Activated CD8-positive, alpha-beta memory T cell treated with anti-CD3 and anti-CD28 coated beads, Interleukin-2, amount 10 ng/mL, durations not matched to agents 7 days and 5 days (primary cell): ENCODE measurements at regions of chr1 and their contacts with region 1.

Region 1: GRCh38 chr1:88877382-88877825 is 14.0 kb downstream of the GTF2B start:
- DNase-seq: no peak
- ATAC-seq: no peak
- H3K4me3 Mint-ChIP-seq: no peak overlapping the region
- H3K27ac Mint-ChIP-seq: no peak overlapping the region
- H3K4me1 Mint-ChIP-seq: peaks cover 28% of the 10 kb centered on the region
- H3K27me3 Mint-ChIP-seq: no peaks in the 10 kb centered on the region

Region 2: DNA sequence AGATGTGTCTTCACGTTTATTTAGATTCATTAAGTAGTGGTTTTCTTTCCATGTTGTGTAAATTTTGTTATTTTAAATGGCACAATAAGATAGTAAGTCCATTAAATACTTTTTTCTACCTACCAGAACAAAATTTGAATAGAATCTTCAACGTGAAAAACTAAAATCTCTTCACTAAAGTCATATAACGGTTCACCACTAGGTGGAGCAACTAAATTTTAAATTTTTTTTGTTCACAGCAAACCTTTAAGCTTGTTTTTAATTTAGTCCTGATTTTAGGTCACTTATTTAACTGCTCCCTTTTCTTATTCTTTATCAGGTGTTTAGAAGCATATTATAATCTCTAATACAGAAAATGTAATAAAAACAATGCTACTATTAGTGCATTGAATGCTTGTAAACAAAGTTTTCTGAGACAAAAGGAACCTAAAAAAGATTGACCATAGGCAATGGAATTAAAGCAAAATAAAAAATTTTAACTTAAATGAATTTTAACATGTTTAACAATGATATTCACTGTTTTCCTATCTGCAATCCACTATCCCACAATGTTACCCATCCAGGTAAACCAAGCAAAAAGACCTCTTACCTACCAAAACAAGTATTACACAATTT is 221.6 kb before region 1 on chr1:
- CTCF ChIA-PET with region 1: interaction called, 42 read pairs
- DNase-seq: no peak
- ATAC-seq: no peak
- H3K4me3 Mint-ChIP-seq: no peak overlapping the region
- H3K27ac Mint-ChIP-seq: no peak overlapping the region
- H3K4me1 Mint-ChIP-seq: peaks cover 10% of the 10 kb centered on the region
- H3K27me3 Mint-ChIP-seq: peaks cover 14% of the 10 kb centered on the region

Region 3: DNA sequence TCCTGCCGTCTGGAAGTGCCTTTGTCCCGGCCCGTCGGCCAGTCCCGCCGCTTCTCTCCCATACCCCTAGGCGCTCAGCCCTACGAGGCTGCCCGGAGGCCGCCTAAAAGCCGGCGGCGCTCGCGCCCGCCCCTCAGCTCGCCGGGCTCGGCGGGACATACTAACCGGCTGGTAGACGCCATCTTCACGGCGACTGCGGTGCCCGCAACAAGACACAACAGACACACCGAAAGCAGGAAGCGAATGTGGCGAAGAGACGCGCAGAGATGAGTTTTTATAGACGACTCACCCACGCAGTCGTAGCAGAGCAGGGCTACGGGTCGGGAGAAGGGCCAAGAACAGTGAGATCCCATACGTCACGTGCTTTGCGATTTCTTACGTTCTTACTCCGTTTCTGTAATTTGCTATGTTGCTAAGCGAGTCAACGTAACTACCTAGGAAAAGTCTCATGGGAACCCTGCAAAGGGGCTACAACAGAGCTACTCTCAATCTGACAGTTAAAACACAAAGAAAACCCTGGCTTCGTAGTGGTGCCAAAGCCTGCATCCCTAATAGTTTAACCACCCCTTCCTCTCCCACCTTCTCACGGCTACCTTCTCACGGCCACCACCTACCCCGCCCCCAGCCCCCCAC is 14.0 kb after region 1 on chr1 and contains the start of gene GTF2B:
- CTCF ChIA-PET with region 1: interaction called, 45 read pairs
- DNase-seq: peak; percentile 97
- ATAC-seq: peak; percentile 87
- H3K4me3 Mint-ChIP-seq: peak within 1 kb of the TSS; percentile 87
- H3K27ac Mint-ChIP-seq: peak within 1 kb of the TSS; percentile 97
- H3K4me1 Mint-ChIP-seq: peaks cover 54% of the 10 kb centered on the region
- H3K27me3 Mint-ChIP-seq: no peaks in the 10 kb centered on the region
- total RNA-seq, gene GTF2B: 34.8 to 42.4 TPM

Region 4: GRCh38 chr1:88983791-88984559 is 106.6 kb after region 1 on chr1:
- CTCF ChIA-PET with region 1: no interaction called
- DNase-seq: peak; percentile 55
- ATAC-seq: peak; percentile 62
- H3K4me3 Mint-ChIP-seq: peak overlapping the region; percentile 64
- H3K27ac Mint-ChIP-seq: peak overlapping the region; percentile 86
- H3K4me1 Mint-ChIP-seq: peaks cover 79% of the 10 kb centered on the region
- H3K27me3 Mint-ChIP-seq: no peaks in the 10 kb centered on the region

Region 5: GRCh38 chr1:89190017-89190416 is 312.6 kb after region 1 on chr1:
- CTCF ChIA-PET with region 1: no interaction called
- DNase-seq: no peak
- ATAC-seq: no peak
- H3K4me3 Mint-ChIP-seq: no peak overlapping the region
- H3K27ac Mint-ChIP-seq: no peak overlapping the region
- H3K4me1 Mint-ChIP-seq: peaks cover 15% of the 10 kb centered on the region
- H3K27me3 Mint-ChIP-seq: no peaks in the 10 kb centered on the region